Spleen (tissue), 13 donors: ENCODE measurements at regions of chr1 and their contacts with region 1.

Region 1: DNA sequence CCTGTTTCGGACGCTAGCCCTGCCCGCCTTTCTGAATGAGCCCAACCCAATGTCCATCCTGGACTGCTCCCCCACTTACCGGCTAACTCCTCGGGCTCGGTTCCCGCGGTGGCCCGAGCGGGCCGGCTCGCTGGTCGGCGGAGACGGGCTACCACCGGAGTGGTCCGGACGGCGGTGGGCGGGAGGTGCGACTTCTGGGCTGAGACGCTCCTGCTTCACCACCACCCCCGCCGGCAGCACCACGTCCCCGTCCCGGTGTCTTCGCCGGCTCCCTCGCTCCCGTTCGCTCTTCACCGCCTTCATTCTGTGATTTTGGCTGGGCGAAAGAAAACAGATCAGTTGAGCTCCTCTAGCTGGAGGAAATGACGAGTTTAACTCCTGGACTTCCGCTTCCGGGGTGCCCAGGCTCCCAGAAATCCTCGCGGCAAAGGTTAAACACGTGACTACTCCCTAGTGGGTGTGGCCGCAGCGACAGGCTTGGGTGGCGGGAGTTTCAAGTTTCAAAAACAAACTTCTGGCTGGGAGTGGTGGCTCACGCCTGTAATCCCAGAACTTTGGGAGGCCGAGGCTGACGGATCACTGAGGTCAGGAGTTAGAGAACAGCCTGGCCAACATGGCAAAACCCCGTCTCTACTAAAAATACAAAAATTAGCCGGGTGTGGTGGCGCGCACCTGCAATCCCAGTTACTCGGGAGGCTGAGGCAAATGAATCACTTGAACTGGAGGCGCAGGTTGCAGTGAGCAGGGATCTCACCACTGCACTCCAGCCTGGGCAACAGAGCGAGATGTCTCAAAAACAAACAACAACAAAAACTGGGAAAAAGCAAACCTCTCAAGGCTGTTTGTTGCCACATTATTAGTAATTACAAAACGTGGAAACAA is at the start of gene SNIP1:
- DNase-seq: peak; percentile 94
- H3K4me3 ChIP-seq: peak within 1 kb of the TSS; percentile 81 to 100 (median 96)
- H3K27ac ChIP-seq: peak within 1 kb of the TSS; percentile 86 to 96 (median 92)
- H3K4me1 ChIP-seq: peaks cover 10 to 65% (median 44%) of the 10 kb centered on the region in 6 donors
- H3K27me3 ChIP-seq: peaks cover 0 to 13% (median 0%) of the 10 kb centered on the region in 7 donors
- CTCF ChIP-seq: peak in 2 of 11 experiments; percentile 16 to 23
- POLR2A ChIP-seq: peak; percentile 28 to 61 (median 33)
- total RNA-seq, gene SNIP1: 18.7 to 26.6 (median 20.7) TPM

Region 2: DNA sequence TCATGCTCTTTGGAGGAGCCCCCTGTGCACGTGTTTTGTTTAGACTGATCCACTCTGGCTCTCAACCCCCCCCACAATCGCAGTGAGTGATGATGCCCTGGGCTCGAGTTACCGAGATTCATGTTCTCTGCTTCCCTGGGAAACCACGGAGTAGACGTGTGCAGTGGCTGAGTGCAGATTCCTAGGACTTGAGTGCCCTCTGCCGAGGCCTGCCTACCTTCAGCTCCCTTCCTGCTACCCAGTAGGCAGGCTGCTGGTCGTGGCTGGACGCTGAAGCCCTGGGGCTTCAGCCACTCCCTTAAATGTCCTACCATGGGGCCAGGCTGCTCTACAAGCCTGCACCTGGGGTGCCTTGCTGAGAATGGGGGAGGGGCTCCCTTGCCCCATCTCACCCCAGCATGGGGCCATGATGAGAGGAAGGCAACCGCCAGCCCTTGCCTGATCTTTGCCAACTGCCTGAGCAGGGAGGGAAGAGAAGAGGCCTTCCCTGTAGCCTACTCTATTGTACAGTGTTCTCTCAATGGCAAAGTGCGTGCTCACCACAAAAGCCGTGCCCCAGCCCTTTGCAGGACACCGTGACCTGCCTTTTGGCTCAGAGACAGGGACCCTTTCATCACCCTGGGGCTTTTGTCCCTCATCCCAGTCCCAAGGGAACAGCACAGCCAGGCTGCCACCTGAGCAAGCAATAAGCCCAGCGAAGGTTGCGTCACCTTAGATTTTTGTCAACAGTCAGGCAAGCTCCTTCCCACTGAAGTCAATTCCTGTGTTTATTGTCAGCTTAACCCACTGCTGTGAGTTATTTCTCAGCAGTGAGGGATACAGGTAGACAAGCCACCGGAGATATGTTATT is 515.7 kb before region 1 on chr1:
- intact Hi-C with region 1: no loop called
- DNase-seq: no peak
- H3K4me3 ChIP-seq: no peak overlapping the region
- H3K27ac ChIP-seq: no peak overlapping the region
- H3K4me1 ChIP-seq: peaks cover 8 to 34% (median 30%) of the 10 kb centered on the region in 6 donors
- H3K27me3 ChIP-seq: peaks cover 0 to 100% (median 77%) of the 10 kb centered on the region in 7 donors
- CTCF ChIP-seq: peak in 4 of 11 experiments; percentile 18 to 44 (median 26)
- POLR2A ChIP-seq: no peak

Region 3: DNA sequence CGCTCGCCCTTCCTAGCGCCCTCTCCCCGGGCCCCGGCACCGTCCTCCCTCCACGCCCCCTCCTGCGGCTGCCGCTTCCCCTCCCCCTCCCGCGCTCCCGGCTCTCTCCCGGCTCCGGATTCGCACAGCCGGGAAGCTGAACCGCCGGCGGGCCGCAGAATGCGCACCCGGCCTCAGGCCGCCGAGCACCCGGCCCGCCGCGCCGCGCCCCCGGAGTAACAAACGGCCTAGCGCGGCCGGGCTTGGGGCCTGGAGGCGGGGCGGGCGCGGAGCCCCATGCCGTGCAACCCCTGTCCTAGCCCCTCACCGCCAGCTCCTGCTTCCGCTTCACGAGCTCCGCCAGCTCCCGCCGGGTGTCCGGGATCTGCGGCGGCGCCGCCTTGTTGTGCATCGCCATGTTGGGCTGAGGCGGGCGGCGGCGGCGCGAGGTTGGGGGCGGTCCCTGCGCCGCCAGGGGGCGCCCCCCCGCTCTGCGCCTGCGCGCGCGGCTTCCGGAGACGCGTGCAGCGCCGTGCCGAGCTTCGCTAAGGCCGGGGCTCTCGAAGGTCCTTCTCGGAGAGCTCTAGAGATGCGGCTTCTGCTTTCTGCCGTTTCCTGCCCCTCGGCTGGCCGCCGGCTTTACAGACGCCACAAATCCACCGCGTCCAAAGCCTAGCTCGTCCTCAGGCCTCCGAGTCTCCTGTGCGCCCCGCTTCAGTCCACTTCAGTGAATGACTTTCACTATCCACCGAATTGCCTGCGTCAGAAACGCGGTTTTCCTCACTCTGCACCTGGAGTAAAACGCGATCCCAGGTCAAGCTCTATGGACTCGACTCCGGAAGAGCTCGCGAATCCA is 39.6 kb before region 1 on chr1 and contains the start of gene MEAF6:
- intact Hi-C with region 1: loop called (anchors 2 kb)
- DNase-seq: peak; percentile 96
- H3K4me3 ChIP-seq: peak within 1 kb of the TSS; percentile 92 to 100 (median 100)
- H3K27ac ChIP-seq: peak within 1 kb of the TSS; percentile 88 to 98 (median 96)
- H3K4me1 ChIP-seq: peaks cover 9 to 46% (median 30%) of the 10 kb centered on the region in 6 donors
- H3K27me3 ChIP-seq: no peaks in the 10 kb centered on the region
- CTCF ChIP-seq: peak in 10 of 11 experiments; percentile 4 to 93 (median 70)
- POLR2A ChIP-seq: peak in 1 of 3 donors; percentile 78
- total RNA-seq, gene MEAF6: 39.5 to 69.0 (median 51.1) TPM

Region 4: DNA sequence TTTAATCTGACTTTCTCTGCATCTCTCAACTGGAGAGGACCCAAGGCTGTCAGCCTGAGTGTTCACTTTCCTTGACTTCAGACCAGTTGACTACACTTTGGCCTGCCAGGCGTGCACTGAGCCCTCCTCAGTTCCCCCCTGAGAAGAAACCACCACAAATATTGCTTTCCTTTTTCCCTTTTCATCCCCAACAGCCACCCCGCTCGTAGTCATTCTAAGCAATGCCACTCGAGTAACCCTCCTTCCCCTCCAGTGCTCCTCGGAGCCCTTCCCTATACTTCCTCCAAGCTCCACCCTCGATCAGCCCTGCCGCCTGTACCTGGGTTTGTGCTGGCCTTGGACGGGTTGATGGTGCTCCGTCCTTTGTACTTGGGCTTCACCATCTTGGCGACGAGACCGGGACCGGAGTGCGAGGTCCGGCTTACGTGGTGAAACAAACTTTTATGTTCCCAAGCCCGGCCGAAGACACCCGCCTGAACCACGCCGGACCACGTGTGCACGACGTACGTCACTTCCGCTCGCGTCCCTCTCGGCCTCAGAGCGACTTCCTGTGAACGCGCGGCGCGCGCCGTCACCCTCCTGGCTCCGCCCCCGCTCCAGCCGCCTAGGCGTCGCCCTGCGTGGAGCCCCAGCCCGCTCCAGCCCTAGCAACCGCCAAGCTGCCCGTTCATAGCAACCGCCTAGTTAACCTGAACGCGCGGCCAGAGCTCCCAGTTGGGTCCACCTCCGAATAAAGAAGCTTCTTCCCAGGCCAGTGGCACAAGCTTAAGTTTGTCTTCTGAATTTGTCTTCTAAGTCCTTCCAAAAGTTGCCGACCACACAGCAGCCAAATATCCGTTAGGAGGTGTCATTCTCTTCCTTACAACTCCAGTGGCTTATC is 41.5 kb after region 1 on chr1 and contains the start of gene GNL2:
- intact Hi-C with region 1: loop called (anchors 5 kb)
- DNase-seq: peak; percentile 99
- H3K4me3 ChIP-seq: peak within 1 kb of the TSS; percentile 57 to 89 (median 84)
- H3K27ac ChIP-seq: peak within 1 kb of the TSS; percentile 24 to 91 (median 86)
- H3K4me1 ChIP-seq: peaks cover 16 to 37% (median 25%) of the 10 kb centered on the region in 6 donors
- H3K27me3 ChIP-seq: no peaks in the 10 kb centered on the region
- CTCF ChIP-seq: peak in 2 of 11 experiments; percentile 5 to 43
- POLR2A ChIP-seq: peak in 2 of 3 donors; percentile 26 to 40
- total RNA-seq, gene GNL2: 28.9 to 58.0 (median 34.8) TPM

Region 5: DNA sequence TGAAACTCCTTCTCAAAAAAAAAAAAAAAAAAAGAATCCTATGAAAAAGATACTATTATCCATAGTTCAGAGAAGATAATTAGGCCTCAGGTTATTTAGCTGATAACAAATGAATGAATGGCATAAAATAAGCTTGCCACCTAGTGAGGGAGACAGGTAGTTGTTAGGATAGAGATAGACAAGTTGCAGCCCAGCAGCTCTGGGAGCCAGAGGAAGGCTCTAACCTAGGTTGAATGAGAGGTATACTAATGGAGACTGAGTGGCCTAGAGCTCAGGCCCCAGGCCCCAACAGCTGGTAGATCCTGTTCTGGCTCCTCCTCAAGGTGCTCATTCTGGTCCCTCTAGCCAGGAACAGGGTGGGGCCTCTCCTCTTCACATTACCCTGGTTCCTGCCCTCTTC is 101.1 kb after region 1 on chr1:
- intact Hi-C with region 1: no loop called
- DNase-seq: no peak
- H3K4me3 ChIP-seq: no peak overlapping the region
- H3K27ac ChIP-seq: no peak overlapping the region
- H3K4me1 ChIP-seq: no peaks in the 10 kb centered on the region
- H3K27me3 ChIP-seq: peaks cover 0 to 24% (median 0%) of the 10 kb centered on the region in 7 donors
- CTCF ChIP-seq: no peak
- POLR2A ChIP-seq: no peak

Region 6: DNA sequence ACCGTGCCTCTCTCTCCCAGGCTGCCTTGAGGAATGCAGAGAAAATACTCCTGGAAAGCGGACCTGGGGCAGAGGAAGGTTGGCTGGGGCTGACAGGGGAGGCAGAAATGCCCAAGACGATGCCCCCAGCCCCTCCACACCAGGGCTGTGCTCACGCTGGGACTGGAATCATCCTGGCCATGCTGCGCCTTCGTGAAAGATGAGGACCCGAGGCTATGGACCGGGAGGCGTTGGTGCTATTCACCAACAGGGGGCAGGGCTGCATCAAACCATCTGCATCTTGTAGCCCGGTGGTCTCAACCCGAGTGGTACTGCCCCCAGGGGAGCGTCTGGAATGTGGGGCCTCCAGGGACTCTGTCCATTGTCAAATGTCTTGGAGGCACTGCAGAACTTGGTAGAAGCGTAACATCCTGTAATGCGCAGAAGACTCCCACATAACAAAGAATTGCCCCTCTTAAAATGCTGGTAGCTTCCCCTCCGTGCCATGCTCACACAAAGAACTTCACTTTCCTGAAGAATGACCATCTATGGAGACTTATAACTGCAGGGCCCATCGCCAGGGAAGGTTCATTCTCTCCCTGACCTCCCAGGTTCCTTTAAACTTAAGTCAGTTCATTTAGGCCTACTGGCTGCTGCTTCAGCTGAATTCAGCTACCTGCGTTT is 1054.2 kb after region 1 on chr1:
- intact Hi-C with region 1: no loop called
- DNase-seq: no peak
- H3K4me3 ChIP-seq: no peak overlapping the region
- H3K27ac ChIP-seq: no peak overlapping the region
- H3K4me1 ChIP-seq: no peaks in the 10 kb centered on the region
- H3K27me3 ChIP-seq: peaks cover 0 to 28% (median 0%) of the 10 kb centered on the region in 7 donors
- CTCF ChIP-seq: peak in 8 of 11 experiments; percentile 25 to 65 (median 43)
- POLR2A ChIP-seq: no peak